B cell (primary cell): ENCODE measurements at regions of chr5 and their contacts with region 1.

Region 1: GRCh38 chr5:54310433-54311175 is at the start of gene ARL15:
- DNase-seq: peak; percentile 96
- ATAC-seq: peak; percentile 96
- H3K4me3 ChIP-seq: peak within 1 kb of the TSS; percentile 73 to 100 (median 88)
- H3K4me3 Mint-ChIP-seq: peak within 1 kb of the TSS; percentile 96
- H3K27ac ChIP-seq: peak within 1 kb of the TSS; percentile 49 to 80
- H3K27ac Mint-ChIP-seq: peak within 1 kb of the TSS; percentile 90
- H3K4me1 ChIP-seq: peaks cover 8 to 20% of the 10 kb centered on the region in 2 donors
- H3K4me1 Mint-ChIP-seq: peaks cover 24% of the 10 kb centered on the region
- H3K27me3 ChIP-seq: peaks cover 0 to 6% (median 3%) of the 10 kb centered on the region in 4 experiments
- H3K27me3 Mint-ChIP-seq: peaks cover 12% of the 10 kb centered on the region
- CTCF ChIP-seq: no peak
- total RNA-seq, gene ARL15: 20.5 and 25.4 TPM in 2 replicates

Region 2: GRCh38 chr5:52799983-52800393 is 1510.6 kb before region 1 on chr5:
- CTCF ChIA-PET with region 1: interaction called, 4 read pairs
- POLR2A ChIA-PET with region 1: no interaction called
- intact Hi-C with region 1: loop called (anchors 1 kb)
- DNase-seq: peak; percentile 95
- ATAC-seq: peak; percentile 91
- H3K4me3 ChIP-seq: peak overlapping the region; percentile 67 to 93 (median 89)
- H3K4me3 Mint-ChIP-seq: peak overlapping the region; percentile 95
- H3K27ac ChIP-seq: peak overlapping the region; percentile 56 to 65
- H3K27ac Mint-ChIP-seq: peak overlapping the region; percentile 93
- H3K4me1 ChIP-seq: peaks cover 23 to 25% of the 10 kb centered on the region in 2 donors
- H3K4me1 Mint-ChIP-seq: peaks cover 48% of the 10 kb centered on the region
- H3K27me3 ChIP-seq: no peaks in the 10 kb centered on the region
- H3K27me3 Mint-ChIP-seq: no peaks in the 10 kb centered on the region
- CTCF ChIP-seq: no peak

Region 3: GRCh38 chr5:54249210-54250028 is 61.2 kb before region 1 on chr5:
- CTCF ChIA-PET with region 1: no interaction called
- POLR2A ChIA-PET with region 1: no interaction called
- intact Hi-C with region 1: loop called (anchors 5 kb)
- DNase-seq: peak; percentile 51
- ATAC-seq: peak; percentile 58
- H3K4me3 ChIP-seq: no peak overlapping the region
- H3K4me3 Mint-ChIP-seq: no peak overlapping the region
- H3K27ac ChIP-seq: no peak overlapping the region
- H3K27ac Mint-ChIP-seq: no peak overlapping the region
- H3K4me1 ChIP-seq: peaks cover 9 to 13% of the 10 kb centered on the region in 2 donors
- H3K4me1 Mint-ChIP-seq: peaks cover 10% of the 10 kb centered on the region
- H3K27me3 ChIP-seq: no peaks in the 10 kb centered on the region
- H3K27me3 Mint-ChIP-seq: no peaks in the 10 kb centered on the region
- CTCF ChIP-seq: no peak

Region 4: GRCh38 chr5:54610197-54610944 is 299.8 kb after region 1 on chr5:
- CTCF ChIA-PET with region 1: no interaction called
- POLR2A ChIA-PET with region 1: no interaction called
- intact Hi-C with region 1: loop called (anchors 1 kb)
- DNase-seq: peak; percentile 85
- ATAC-seq: peak; percentile 95
- H3K4me3 ChIP-seq: peak overlapping the region in 2 of 5 experiments; percentile 9 to 45
- H3K4me3 Mint-ChIP-seq: peak overlapping the region; percentile 52
- H3K27ac ChIP-seq: peak overlapping the region; percentile 50 to 57
- H3K27ac Mint-ChIP-seq: peak overlapping the region; percentile 82
- H3K4me1 ChIP-seq: peaks cover 32 to 34% of the 10 kb centered on the region in 2 donors
- H3K4me1 Mint-ChIP-seq: peaks cover 46% of the 10 kb centered on the region
- H3K27me3 ChIP-seq: no peaks in the 10 kb centered on the region
- H3K27me3 Mint-ChIP-seq: no peaks in the 10 kb centered on the region
- CTCF ChIP-seq: no peak

Region 5: GRCh38 chr5:54844905-54845566 is 534.4 kb after region 1 on chr5:
- CTCF ChIA-PET with region 1: no interaction called
- POLR2A ChIA-PET with region 1: no interaction called
- intact Hi-C with region 1: loop called (anchors 5 kb)
- DNase-seq: peak; percentile 76
- ATAC-seq: peak; percentile 54
- H3K4me3 ChIP-seq: peak overlapping the region in 3 of 5 experiments; percentile 26 to 41 (median 28)
- H3K4me3 Mint-ChIP-seq: peak overlapping the region; percentile 85
- H3K27ac ChIP-seq: peak overlapping the region in 1 of 2 donors; percentile 70
- H3K27ac Mint-ChIP-seq: peak overlapping the region; percentile 91
- H3K4me1 ChIP-seq: peaks cover 5 to 10% of the 10 kb centered on the region in 2 donors
- H3K4me1 Mint-ChIP-seq: peaks cover 23% of the 10 kb centered on the region
- H3K27me3 ChIP-seq: no peaks in the 10 kb centered on the region
- H3K27me3 Mint-ChIP-seq: peaks cover 16% of the 10 kb centered on the region
- CTCF ChIP-seq: peak; percentile 78

Region 6: DNA sequence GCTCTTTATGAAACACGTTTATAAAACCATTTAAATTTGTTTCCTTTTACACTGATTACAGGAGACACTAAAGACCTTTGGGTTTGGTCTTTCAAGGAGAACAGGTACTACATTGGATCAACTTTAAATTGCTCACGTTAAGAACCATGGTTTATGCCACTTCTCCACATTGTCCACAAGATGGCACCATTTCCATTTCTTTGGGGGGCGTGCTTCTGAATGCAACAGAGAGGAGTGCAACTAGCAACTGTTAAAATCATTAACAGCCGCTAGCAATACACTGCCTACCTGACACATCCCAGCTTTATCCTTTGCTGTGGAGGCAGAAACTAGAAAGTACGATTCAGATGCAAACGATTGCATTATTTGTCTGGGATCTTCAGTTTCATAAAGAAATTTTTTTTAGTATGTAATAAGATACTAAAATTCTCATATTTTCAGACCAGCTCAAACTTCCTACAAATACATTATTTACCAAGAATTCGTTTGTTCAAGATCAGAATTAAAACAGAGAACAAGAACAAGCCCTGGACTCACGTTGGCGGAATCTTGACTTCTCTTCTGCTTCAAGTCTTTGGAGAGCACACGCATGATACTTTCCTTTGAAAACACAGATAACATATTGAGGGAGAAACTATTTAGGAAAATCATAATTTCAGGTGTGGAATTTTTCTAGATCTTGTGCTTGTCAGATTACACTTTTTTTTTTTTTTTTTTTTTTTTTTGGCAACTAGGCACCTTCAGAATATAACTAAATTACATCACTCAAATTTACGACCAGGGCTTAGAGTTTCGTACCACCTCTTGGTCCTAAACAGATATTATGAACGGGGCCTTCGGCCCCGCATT is 861.7 kb after region 1 on chr5:
- CTCF ChIA-PET with region 1: no interaction called
- POLR2A ChIA-PET with region 1: interaction called, 4 read pairs
- intact Hi-C with region 1: loop called (anchors 2 kb)
- DNase-seq: peak; percentile 87
- ATAC-seq: peak; percentile 55
- H3K4me3 ChIP-seq: peak overlapping the region; percentile 44 to 77 (median 57)
- H3K4me3 Mint-ChIP-seq: peak overlapping the region; percentile 91
- H3K27ac ChIP-seq: no peak overlapping the region
- H3K27ac Mint-ChIP-seq: peak overlapping the region; percentile 29
- H3K4me1 ChIP-seq: peaks cover 33% of the 10 kb centered on the region in 2 donors
- H3K4me1 Mint-ChIP-seq: peaks cover 31% of the 10 kb centered on the region
- H3K27me3 ChIP-seq: peaks cover 3 to 51% (median 39%) of the 10 kb centered on the region in 4 experiments
- H3K27me3 Mint-ChIP-seq: peaks cover 57% of the 10 kb centered on the region
- CTCF ChIP-seq: peak; percentile 89

Region 7: DNA sequence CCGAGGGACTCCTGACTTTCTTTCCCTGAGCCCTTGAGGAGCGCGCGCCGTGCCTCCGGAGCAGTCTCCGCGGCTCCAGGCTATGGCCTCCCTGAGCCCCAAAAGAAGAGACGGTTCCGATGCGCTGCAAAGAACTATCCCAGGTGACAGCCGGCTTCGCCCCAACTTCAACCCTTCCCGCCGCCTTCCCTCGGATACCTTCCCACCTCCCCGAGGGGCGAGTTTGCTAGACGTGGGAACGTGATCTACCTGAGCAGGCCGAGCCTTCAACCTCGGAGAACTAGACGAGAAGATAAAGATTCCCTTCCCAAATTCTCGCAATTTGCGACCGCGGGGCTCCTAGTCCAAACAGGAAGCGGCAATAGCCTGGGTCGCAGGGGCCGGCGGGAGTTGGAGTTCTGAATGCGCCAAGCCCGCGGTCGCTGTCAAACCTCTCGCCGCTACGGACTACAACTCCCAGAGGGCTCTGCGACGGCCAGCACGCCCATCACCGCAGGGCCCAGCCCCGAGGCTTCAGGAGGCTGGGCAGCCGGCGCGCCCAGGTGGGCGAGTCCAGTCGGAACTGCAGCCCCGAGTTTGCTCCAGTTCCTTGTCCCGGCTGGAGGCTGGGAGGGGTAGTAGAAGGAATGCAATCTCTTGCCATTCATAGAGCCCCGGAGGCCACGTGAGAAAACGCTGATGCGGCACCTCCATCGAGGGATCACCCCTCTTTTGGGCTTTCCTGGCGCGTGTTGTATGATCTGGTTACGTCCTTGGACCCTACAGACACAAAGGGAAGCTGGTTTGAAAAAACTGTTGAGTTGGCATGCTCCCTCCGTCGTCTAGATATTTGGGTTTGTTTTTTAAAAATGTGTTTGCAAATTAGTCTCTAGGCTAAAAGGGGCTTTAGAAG is 1401.6 kb after region 1 on chr5 and contains the start of gene SLC38A9:
- CTCF ChIA-PET with region 1: no interaction called
- POLR2A ChIA-PET with region 1: no interaction called
- intact Hi-C with region 1: loop called (anchors 10 kb)
- DNase-seq: peak; percentile 93
- ATAC-seq: peak; percentile 100
- H3K4me3 ChIP-seq: peak within 1 kb of the TSS; percentile 80 to 96 (median 94)
- H3K4me3 Mint-ChIP-seq: peak within 1 kb of the TSS; percentile 100
- H3K27ac ChIP-seq: peak within 1 kb of the TSS; percentile 49 to 74
- H3K27ac Mint-ChIP-seq: peak within 1 kb of the TSS; percentile 93
- H3K4me1 ChIP-seq: peaks cover 11 to 19% of the 10 kb centered on the region in 2 donors
- H3K4me1 Mint-ChIP-seq: peaks cover 19% of the 10 kb centered on the region
- H3K27me3 ChIP-seq: no peaks in the 10 kb centered on the region
- H3K27me3 Mint-ChIP-seq: no peaks in the 10 kb centered on the region
- CTCF ChIP-seq: no peak
- total RNA-seq, gene SLC38A9: 36.3 and 43.5 TPM in 2 replicates